Activated naive CD4-positive, alpha-beta T cell treated with anti-CD3 and anti-CD28 coated beads, Interleukin-2, amount 10 ng/mL, durations not matched to agents 7 days and 5 days (primary cell): ENCODE measurements at regions of chr1 and their contacts with region 1.

Region 1: DNA sequence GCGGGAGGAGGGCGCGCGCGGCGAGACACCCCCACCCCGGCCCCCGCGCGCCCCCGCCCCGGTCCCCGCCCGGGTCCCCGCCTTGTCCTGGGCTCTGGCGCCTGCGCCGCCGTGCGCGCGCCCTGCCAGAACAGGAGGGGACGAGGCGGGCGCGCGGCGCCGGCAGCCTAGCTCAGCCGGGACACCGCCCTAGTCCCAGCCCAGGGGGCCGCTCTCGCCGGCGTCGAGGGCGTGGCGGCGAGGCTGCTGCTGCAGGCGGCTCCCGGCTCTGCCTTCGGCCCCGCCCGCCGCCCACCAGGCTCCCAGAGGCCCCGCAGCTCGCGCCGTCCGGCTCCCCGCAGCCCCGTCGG is at the start of gene RCAN3:
- DNase-seq: peak; percentile 92
- H3K4me3 Mint-ChIP-seq: peak within 1 kb of the TSS; percentile 98
- H3K27ac Mint-ChIP-seq: peak within 1 kb of the TSS; percentile 99
- H3K4me1 Mint-ChIP-seq: peaks cover 57% of the 10 kb centered on the region
- H3K27me3 Mint-ChIP-seq: no peaks in the 10 kb centered on the region

Region 2: GRCh38 chr1:24486331-24487065 is 16.2 kb before region 1 on chr1:
- CTCF ChIA-PET with region 1: interaction called, 19 read pairs
- DNase-seq: peak; percentile 77
- H3K4me3 Mint-ChIP-seq: peak overlapping the region; percentile 65
- H3K27ac Mint-ChIP-seq: peak overlapping the region; percentile 97
- H3K4me1 Mint-ChIP-seq: peaks cover 87% of the 10 kb centered on the region
- H3K27me3 Mint-ChIP-seq: no peaks in the 10 kb centered on the region

Region 3: GRCh38 chr1:24526940-24527542 is 24.4 kb after region 1 on chr1:
- CTCF ChIA-PET with region 1: interaction called, 15 read pairs
- DNase-seq: peak; percentile 66
- H3K4me3 Mint-ChIP-seq: no peak overlapping the region
- H3K27ac Mint-ChIP-seq: no peak overlapping the region
- H3K4me1 Mint-ChIP-seq: peaks cover 51% of the 10 kb centered on the region
- H3K27me3 Mint-ChIP-seq: no peaks in the 10 kb centered on the region

Region 4: GRCh38 chr1:24586970-24587820 is 84.5 kb after region 1 on chr1:
- CTCF ChIA-PET with region 1: interaction called, 12 read pairs
- DNase-seq: peak; percentile 64
- H3K4me3 Mint-ChIP-seq: no peak overlapping the region
- H3K27ac Mint-ChIP-seq: no peak overlapping the region
- H3K4me1 Mint-ChIP-seq: peaks cover 9% of the 10 kb centered on the region
- H3K27me3 Mint-ChIP-seq: peaks cover 56% of the 10 kb centered on the region